CD4-positive, alpha-beta T cell (primary cell): ENCODE measurements at regions of chr15 and their contacts with region 1.

Region 1: DNA sequence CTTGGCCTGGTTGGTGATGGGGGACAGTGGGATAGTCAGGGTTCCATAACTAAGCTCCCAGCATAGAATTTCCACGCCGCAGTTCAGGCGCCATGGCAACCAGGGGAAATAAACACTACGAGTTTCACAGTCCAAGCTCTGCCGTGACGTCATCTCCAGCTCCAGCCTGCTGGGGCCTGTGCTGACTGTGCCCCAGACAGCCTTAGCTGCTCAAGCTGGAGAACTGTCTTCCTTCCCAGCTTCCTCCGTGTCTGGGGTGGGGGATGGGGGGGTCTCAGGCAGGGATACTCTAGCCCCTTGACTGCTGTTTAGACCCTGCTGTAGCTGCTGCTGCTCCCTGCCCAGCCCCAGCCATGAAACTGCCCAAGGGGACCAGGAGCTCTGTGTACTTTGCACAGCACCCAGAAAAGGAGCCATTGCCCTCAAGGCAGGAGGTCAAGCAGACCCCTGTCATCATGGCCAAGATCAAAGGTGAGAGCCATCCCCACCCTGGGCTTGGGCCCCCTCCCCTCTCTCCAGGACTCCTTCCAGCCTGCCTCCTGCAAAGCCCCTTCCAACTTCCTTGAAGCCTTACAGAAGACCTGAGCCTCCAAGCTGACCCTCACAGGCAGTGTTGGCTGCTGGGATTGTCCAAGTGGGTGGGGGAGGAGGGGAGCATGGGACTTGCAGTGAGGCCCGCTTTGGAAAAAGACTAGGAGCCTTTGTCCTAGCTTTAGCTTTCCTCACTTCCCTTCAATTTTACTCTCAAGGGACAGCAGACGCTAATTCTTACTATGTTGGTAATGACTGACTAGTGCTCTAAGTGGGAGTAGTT is 11.4 kb upstream of the CSPG4 start:
- DNase-seq: peak in 9 of 14 experiments; percentile 16 to 80 (median 33)
- ATAC-seq: peak; percentile 54
- H3K4me3 ChIP-seq: no peak overlapping the region
- H3K4me3 Mint-ChIP-seq: no peak overlapping the region
- H3K27ac ChIP-seq: no peak overlapping the region
- H3K27ac Mint-ChIP-seq: no peak overlapping the region
- H3K4me1 ChIP-seq: peaks cover 7% of the 10 kb centered on the region
- H3K4me1 Mint-ChIP-seq: no peaks in the 10 kb centered on the region
- H3K27me3 ChIP-seq: no peaks in the 10 kb centered on the region
- H3K27me3 Mint-ChIP-seq: peaks cover 6% of the 10 kb centered on the region
- CTCF ChIP-seq: no peak

Region 2: GRCh38 chr15:75801859-75802593 is 78.0 kb after region 1 on chr15:
- CTCF ChIA-PET with region 1: interaction called, 27 read pairs
- POLR2A ChIA-PET with region 1: no interaction called
- intact Hi-C with region 1: loop called (anchors 1 kb)
- DNase-seq: peak; percentile 67 to 87 (median 74)
- ATAC-seq: peak; percentile 100
- H3K4me3 ChIP-seq: no peak overlapping the region
- H3K4me3 Mint-ChIP-seq: no peak overlapping the region
- H3K27ac ChIP-seq: no peak overlapping the region
- H3K27ac Mint-ChIP-seq: no peak overlapping the region
- H3K4me1 ChIP-seq: peaks cover 7% of the 10 kb centered on the region
- H3K4me1 Mint-ChIP-seq: peaks cover 4% of the 10 kb centered on the region
- H3K27me3 ChIP-seq: peaks cover 10 to 11% of the 10 kb centered on the region in 2 experiments
- H3K27me3 Mint-ChIP-seq: peaks cover 47% of the 10 kb centered on the region
- CTCF ChIP-seq: peak; percentile 81

Region 3: GRCh38 chr15:75861750-75862402 is 137.8 kb after region 1 on chr15:
- CTCF ChIA-PET with region 1: no interaction called
- POLR2A ChIA-PET with region 1: no interaction called
- intact Hi-C with region 1: no loop called
- DNase-seq: no peak
- ATAC-seq: no peak
- H3K4me3 ChIP-seq: no peak overlapping the region
- H3K4me3 Mint-ChIP-seq: no peak overlapping the region
- H3K27ac ChIP-seq: no peak overlapping the region
- H3K27ac Mint-ChIP-seq: no peak overlapping the region
- H3K4me1 ChIP-seq: no peaks in the 10 kb centered on the region
- H3K4me1 Mint-ChIP-seq: peaks cover 72% of the 10 kb centered on the region
- H3K27me3 ChIP-seq: no peaks in the 10 kb centered on the region
- H3K27me3 Mint-ChIP-seq: no peaks in the 10 kb centered on the region
- CTCF ChIP-seq: no peak

Region 4: DNA sequence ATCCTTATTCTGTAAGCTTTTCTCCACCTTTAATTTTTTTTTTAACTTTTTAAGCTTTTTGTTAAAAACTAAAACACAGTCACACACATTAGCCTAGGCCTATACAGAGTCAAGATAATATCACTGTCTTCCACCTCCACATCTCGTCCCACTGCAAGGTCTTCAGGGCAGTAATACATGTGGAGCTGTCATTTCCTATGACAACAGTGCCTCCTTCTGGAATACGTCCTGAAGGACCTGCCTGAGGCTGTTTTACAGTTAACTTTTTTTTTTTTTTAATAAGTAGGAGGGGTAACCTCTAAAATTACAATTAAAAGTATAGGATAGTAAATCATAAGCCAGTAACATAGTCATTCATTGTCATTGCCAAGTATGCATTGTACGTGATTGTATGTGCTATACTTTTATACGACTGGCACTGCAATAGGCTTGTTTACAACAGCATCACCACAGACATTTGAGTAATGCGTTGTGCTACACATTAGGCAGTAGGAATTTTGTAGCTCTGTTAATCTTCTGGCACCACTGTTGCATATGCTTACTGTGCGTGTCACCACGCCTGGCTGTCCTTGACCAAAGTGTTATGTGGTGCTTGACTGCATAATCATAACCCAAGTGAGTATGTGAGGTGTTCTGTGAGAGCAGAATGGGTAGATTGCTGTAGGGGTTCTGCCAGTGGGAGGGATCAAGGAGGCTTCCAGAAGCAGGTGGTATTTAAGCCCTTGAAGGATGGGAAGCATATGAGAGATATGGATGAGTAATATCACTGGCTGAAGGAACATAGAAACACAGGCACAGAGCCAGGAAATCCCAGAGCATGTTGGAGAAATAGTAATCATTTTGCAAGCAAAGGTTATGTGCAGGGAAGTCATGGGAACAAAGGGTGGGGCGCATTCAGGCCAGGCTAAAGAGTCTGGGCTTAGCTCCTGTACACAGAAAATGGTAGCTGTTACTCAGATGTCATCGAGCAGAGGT is 198.0 kb after region 1 on chr15:
- CTCF ChIA-PET with region 1: no interaction called
- POLR2A ChIA-PET with region 1: no interaction called
- intact Hi-C with region 1: loop called in 1 of 2 experiments (anchors 5 kb)
- DNase-seq: peak in 5 of 14 experiments; percentile 5 to 66 (median 34)
- ATAC-seq: peak; percentile 67
- H3K4me3 ChIP-seq: no peak overlapping the region
- H3K4me3 Mint-ChIP-seq: no peak overlapping the region
- H3K27ac ChIP-seq: no peak overlapping the region
- H3K27ac Mint-ChIP-seq: no peak overlapping the region
- H3K4me1 ChIP-seq: no peaks in the 10 kb centered on the region
- H3K4me1 Mint-ChIP-seq: peaks cover 22% of the 10 kb centered on the region
- H3K27me3 ChIP-seq: no peaks in the 10 kb centered on the region
- H3K27me3 Mint-ChIP-seq: no peaks in the 10 kb centered on the region
- CTCF ChIP-seq: peak; percentile 33

Region 5: GRCh38 chr15:76057332-76058000 is 333.4 kb after region 1 on chr15:
- CTCF ChIA-PET with region 1: no interaction called
- POLR2A ChIA-PET with region 1: no interaction called
- intact Hi-C with region 1: loop called in 1 of 2 experiments (anchors 10 kb)
- DNase-seq: peak in 7 of 14 experiments; percentile 7 to 72 (median 42)
- ATAC-seq: peak; percentile 51
- H3K4me3 ChIP-seq: no peak overlapping the region
- H3K4me3 Mint-ChIP-seq: no peak overlapping the region
- H3K27ac ChIP-seq: no peak overlapping the region
- H3K27ac Mint-ChIP-seq: no peak overlapping the region
- H3K4me1 ChIP-seq: peaks cover 20% of the 10 kb centered on the region
- H3K4me1 Mint-ChIP-seq: peaks cover 23% of the 10 kb centered on the region
- H3K27me3 ChIP-seq: peaks cover 31 to 53% of the 10 kb centered on the region in 2 experiments
- H3K27me3 Mint-ChIP-seq: peaks cover 61% of the 10 kb centered on the region
- CTCF ChIP-seq: peak; percentile 82

Region 6: GRCh38 chr15:76139368-76140073 is 415.5 kb after region 1 on chr15:
- CTCF ChIA-PET with region 1: interaction called, 3 read pairs
- POLR2A ChIA-PET with region 1: no interaction called
- intact Hi-C with region 1: loop called in 1 of 2 experiments (anchors 2 kb)
- DNase-seq: peak; percentile 48 to 79 (median 62)
- ATAC-seq: peak; percentile 89
- H3K4me3 ChIP-seq: no peak overlapping the region
- H3K4me3 Mint-ChIP-seq: no peak overlapping the region
- H3K27ac ChIP-seq: no peak overlapping the region
- H3K27ac Mint-ChIP-seq: no peak overlapping the region
- H3K4me1 ChIP-seq: peaks cover 8% of the 10 kb centered on the region
- H3K4me1 Mint-ChIP-seq: no peaks in the 10 kb centered on the region
- H3K27me3 ChIP-seq: peaks cover 15 to 16% of the 10 kb centered on the region in 2 experiments
- H3K27me3 Mint-ChIP-seq: peaks cover 24% of the 10 kb centered on the region
- CTCF ChIP-seq: peak; percentile 88